ENCODE measurements at regions of chr13 and their contacts with region 1.

Region 1: GRCh38 chr13:111066544-111066943 is 48.6 kb upstream of the ARHGEF7 start:
- DNase-seq: no peak
- ATAC-seq: no peak
- H3K4me3 ChIP-seq: peak overlapping the region in 1 of 5 experiments; percentile 24
- H3K4me3 Mint-ChIP-seq: peak overlapping the region; percentile 78
- H3K27ac ChIP-seq: no peak overlapping the region
- H3K27ac Mint-ChIP-seq: no peak overlapping the region
- H3K4me1 ChIP-seq: peaks cover 8 to 11% of the 10 kb centered on the region in 2 donors
- H3K4me1 Mint-ChIP-seq: peaks cover 9% of the 10 kb centered on the region
- H3K27me3 ChIP-seq: peaks cover 0 to 24% (median 7%) of the 10 kb centered on the region in 4 experiments
- H3K27me3 Mint-ChIP-seq: peaks cover 42% of the 10 kb centered on the region
- CTCF ChIP-seq: no peak

Region 2: DNA sequence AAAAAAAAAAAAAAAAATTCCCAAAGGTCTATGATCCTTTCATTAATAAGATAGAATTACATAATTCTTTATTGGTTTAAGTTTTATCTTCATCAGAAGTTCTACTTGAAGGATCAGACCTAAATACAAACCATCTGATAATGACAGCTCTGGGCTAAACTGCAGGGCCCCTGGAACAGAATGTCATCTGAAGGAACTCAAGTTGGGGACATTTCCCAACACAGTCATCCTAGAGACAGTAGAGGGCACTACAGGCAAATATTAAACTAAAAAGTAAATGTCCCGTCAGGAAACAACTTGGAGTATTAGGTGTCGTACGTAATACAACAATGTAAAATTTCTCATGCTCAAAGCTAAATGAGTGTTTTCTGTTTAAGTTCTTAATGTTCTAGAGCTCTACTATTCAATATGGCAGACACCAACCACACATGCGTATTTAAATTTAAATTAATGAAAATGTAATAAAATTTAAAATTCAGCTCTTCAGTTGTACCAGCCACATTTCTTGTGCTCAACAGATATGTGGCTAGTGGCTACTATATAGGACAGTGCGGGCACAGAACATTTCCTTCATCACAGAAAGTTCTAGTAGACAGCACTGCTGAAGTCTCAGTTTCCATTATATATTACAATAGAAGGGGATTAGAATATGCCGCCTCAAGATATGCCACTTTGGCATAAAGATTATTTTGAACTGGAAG is 473.0 kb before region 1 on chr13:
- CTCF ChIA-PET with region 1: interaction called, 4 read pairs
- POLR2A ChIA-PET with region 1: no interaction called
- intact Hi-C with region 1: loop called (anchors 10 kb)
- DNase-seq: peak; percentile 64
- ATAC-seq: peak; percentile 68
- H3K4me3 ChIP-seq: no peak overlapping the region
- H3K4me3 Mint-ChIP-seq: no peak overlapping the region
- H3K27ac ChIP-seq: no peak overlapping the region
- H3K27ac Mint-ChIP-seq: no peak overlapping the region
- H3K4me1 ChIP-seq: no peaks in the 10 kb centered on the region
- H3K4me1 Mint-ChIP-seq: peaks cover 4% of the 10 kb centered on the region
- H3K27me3 ChIP-seq: no peaks in the 10 kb centered on the region
- H3K27me3 Mint-ChIP-seq: no peaks in the 10 kb centered on the region
- CTCF ChIP-seq: peak; percentile 61

Region 3: GRCh38 chr13:111042526-111043225 is 23.9 kb before region 1 on chr13:
- CTCF ChIA-PET with region 1: no interaction called
- POLR2A ChIA-PET with region 1: no interaction called
- intact Hi-C with region 1: no loop called
- DNase-seq: no peak
- ATAC-seq: no peak
- H3K4me3 ChIP-seq: no peak overlapping the region
- H3K4me3 Mint-ChIP-seq: no peak overlapping the region
- H3K27ac ChIP-seq: no peak overlapping the region
- H3K27ac Mint-ChIP-seq: no peak overlapping the region
- H3K4me1 ChIP-seq: peaks cover 3 to 8% of the 10 kb centered on the region in 2 donors
- H3K4me1 Mint-ChIP-seq: peaks cover 20% of the 10 kb centered on the region
- H3K27me3 ChIP-seq: no peaks in the 10 kb centered on the region
- H3K27me3 Mint-ChIP-seq: peaks cover 28% of the 10 kb centered on the region
- CTCF ChIP-seq: no peak

Region 4: DNA sequence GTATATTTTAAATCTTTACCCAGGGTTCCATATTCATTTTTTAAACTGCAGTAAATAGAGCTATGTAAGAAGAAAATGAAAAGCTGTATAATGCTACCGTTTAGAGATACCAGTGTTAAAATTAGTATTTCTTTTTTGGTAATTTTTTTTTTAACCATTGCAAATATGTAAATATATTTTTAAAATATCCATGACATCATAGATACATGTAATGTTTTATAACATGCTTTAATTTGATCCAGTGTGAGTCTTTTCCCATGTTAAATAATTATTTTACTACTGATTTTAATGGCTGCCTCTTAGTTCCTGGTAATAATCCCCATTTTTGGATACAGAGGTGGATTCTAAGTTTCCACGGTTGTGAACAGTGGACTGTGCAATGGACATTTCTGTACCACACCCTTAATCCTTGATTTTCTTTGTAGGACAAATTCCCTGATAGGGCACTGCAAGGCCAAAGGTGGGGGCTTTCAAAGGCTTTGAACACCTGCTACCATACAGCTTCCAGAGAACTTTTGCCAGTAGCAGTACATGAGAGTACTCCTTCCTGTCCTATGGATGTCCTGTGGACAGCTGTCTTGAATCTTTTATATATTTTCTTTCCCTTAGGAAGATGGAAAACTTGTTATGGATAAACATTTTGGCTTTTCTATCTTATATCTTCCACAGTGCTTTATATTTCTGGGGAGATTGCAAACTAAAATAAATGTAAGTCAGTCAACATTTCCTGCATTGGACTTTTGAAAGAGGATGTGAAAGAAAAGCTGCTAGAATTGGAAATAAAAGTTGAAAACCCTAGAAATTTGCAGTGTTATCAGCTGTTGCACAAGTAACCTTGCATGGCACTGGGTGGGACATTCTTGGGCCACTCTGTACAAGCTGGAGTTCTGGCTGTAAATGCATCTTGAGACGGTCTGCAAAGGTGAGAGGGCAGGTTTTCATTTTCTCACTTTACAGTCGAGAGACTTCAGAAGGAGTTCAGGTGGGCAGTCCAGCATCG is 95.4 kb after region 1 on chr13:
- CTCF ChIA-PET with region 1: interaction called, 11 read pairs
- POLR2A ChIA-PET with region 1: no interaction called
- intact Hi-C with region 1: no loop called
- DNase-seq: no peak
- ATAC-seq: no peak
- H3K4me3 ChIP-seq: peak overlapping the region in 1 of 5 experiments; percentile 23
- H3K4me3 Mint-ChIP-seq: peak overlapping the region; percentile 62
- H3K27ac ChIP-seq: peak overlapping the region in 1 of 2 donors; percentile 8
- H3K27ac Mint-ChIP-seq: peak overlapping the region; percentile 65
- H3K4me1 ChIP-seq: peaks cover 42 to 50% of the 10 kb centered on the region in 2 donors
- H3K4me1 Mint-ChIP-seq: peaks cover 67% of the 10 kb centered on the region
- H3K27me3 ChIP-seq: no peaks in the 10 kb centered on the region
- H3K27me3 Mint-ChIP-seq: no peaks in the 10 kb centered on the region
- CTCF ChIP-seq: no peak

Region 5: GRCh38 chr13:111177081-111177711 is 110.7 kb after region 1 on chr13:
- CTCF ChIA-PET with region 1: interaction called, 11 read pairs
- POLR2A ChIA-PET with region 1: no interaction called
- intact Hi-C with region 1: no loop called
- DNase-seq: peak; percentile 69
- ATAC-seq: peak; percentile 74
- H3K4me3 ChIP-seq: peak overlapping the region in 1 of 5 experiments; percentile 5
- H3K4me3 Mint-ChIP-seq: peak overlapping the region; percentile 78
- H3K27ac ChIP-seq: peak overlapping the region; percentile 61 to 73
- H3K27ac Mint-ChIP-seq: peak overlapping the region; percentile 95
- H3K4me1 ChIP-seq: peaks cover 46 to 58% of the 10 kb centered on the region in 2 donors
- H3K4me1 Mint-ChIP-seq: peaks cover 75% of the 10 kb centered on the region
- H3K27me3 ChIP-seq: no peaks in the 10 kb centered on the region
- H3K27me3 Mint-ChIP-seq: no peaks in the 10 kb centered on the region
- CTCF ChIP-seq: no peak

Region 6: GRCh38 chr13:111210544-111211469 is 144.3 kb after region 1 on chr13:
- CTCF ChIA-PET with region 1: interaction called, 167 read pairs
- POLR2A ChIA-PET with region 1: interaction called, 9 read pairs
- intact Hi-C with region 1: loop called (anchors 1 kb)
- DNase-seq: no peak
- ATAC-seq: no peak
- H3K4me3 ChIP-seq: no peak overlapping the region
- H3K4me3 Mint-ChIP-seq: no peak overlapping the region
- H3K27ac ChIP-seq: peak overlapping the region in 1 of 2 donors; percentile 29
- H3K27ac Mint-ChIP-seq: peak overlapping the region; percentile 22
- H3K4me1 ChIP-seq: peaks cover 14 to 29% of the 10 kb centered on the region in 2 donors
- H3K4me1 Mint-ChIP-seq: peaks cover 54% of the 10 kb centered on the region
- H3K27me3 ChIP-seq: no peaks in the 10 kb centered on the region
- H3K27me3 Mint-ChIP-seq: no peaks in the 10 kb centered on the region
- CTCF ChIP-seq: no peak

Region 7: DNA sequence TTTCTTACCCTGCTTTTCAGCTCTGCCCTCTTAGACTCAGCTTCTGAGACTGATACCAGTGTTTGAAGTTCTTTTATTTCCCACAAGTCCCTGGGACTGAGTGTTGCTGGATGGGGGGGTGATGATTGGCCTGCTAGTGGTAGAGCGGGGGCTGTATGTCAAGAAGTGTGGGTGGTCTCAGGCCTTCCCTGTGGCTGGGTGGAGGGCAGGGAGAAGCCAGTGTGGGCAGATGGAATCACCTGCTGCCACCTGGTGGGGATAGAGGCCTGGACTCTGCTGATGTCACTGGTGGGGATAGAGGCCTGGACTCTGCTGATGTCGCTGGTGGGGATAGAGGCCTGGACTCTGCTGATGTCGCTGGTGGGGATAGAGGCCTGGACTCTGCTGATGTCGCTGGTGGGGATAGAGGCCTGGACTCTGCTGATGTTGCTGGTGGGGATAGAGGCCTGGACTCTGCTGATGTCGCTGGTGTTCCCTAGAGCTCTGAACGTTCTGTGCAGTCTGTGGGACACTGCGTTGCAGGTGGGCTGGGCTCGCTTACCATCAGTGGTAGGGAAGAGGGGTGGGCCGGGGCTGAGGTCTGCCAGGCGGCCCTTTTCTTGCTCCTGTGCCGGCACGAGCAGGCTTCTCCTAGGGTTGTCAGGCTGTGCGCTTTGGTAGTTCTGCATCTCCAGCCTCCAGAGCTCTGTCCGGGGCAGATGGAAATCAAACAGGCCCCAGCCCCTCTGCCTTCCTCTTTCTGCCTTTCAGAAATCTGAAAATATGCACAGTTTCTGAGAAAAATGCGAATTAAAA is 149.8 kb after region 1 on chr13:
- CTCF ChIA-PET with region 1: interaction called, 167 read pairs
- POLR2A ChIA-PET with region 1: interaction called, 9 read pairs
- intact Hi-C with region 1: loop called (anchors 1 kb)
- DNase-seq: peak; percentile 61
- ATAC-seq: peak; percentile 74
- H3K4me3 ChIP-seq: no peak overlapping the region
- H3K4me3 Mint-ChIP-seq: no peak overlapping the region
- H3K27ac ChIP-seq: no peak overlapping the region
- H3K27ac Mint-ChIP-seq: peak overlapping the region; percentile 55
- H3K4me1 ChIP-seq: peaks cover 18 to 31% of the 10 kb centered on the region in 2 donors
- H3K4me1 Mint-ChIP-seq: peaks cover 47% of the 10 kb centered on the region
- H3K27me3 ChIP-seq: no peaks in the 10 kb centered on the region
- H3K27me3 Mint-ChIP-seq: no peaks in the 10 kb centered on the region
- CTCF ChIP-seq: peak; percentile 62

Region 8: DNA sequence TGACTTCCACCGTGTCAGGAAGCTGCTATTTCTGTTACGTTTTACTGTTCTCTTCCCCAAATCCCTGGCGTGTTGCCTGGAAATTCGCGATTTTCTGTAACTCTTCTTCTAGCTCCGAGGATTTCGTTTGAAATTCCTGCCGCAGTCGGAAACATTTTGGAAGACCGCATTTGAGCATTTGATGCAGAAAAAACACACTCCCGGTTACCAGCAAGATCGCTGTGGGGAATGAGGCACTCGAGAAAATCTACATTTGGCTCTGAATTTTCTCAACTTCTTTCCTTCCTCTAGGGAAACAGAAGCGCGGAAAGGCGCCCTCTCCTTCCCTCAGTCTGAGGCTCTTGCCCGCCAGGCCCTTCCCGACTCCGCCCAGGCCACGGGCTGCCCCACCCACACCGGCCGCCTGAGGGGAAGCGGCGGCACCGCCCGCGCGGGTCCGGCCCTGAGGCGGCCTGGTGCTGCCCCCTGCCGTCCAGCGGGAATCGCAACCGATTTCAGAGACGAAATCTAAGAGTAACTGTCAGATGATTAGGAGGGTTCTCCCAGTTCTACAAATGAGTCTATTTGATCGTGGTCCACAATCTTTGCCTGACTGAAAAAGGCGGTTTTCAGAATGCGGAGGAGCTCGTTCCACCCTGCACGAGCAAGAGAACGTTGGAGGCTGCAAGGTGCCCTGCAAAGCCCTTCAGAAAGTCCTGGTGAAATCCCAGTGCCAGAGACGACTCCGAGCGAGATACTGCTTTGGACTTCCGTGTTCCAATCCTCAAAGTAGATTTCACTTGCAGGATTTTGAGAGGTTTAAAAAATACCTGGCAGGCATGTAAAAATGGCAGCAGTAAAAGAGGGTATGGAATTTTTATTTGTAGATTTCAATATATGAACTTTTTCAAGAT is 1539.8 kb after region 1 on chr13:
- CTCF ChIA-PET with region 1: interaction called, 5 read pairs
- POLR2A ChIA-PET with region 1: no interaction called
- intact Hi-C with region 1: loop called (anchors 5 kb)
- DNase-seq: peak; percentile 87
- ATAC-seq: peak; percentile 100
- H3K4me3 ChIP-seq: peak overlapping the region; percentile 35 to 68 (median 58)
- H3K4me3 Mint-ChIP-seq: peak overlapping the region; percentile 87
- H3K27ac ChIP-seq: no peak overlapping the region
- H3K27ac Mint-ChIP-seq: no peak overlapping the region
- H3K4me1 ChIP-seq: peaks cover 5 to 9% of the 10 kb centered on the region in 2 donors
- H3K4me1 Mint-ChIP-seq: peaks cover 8% of the 10 kb centered on the region
- H3K27me3 ChIP-seq: peaks cover 0 to 14% (median 5%) of the 10 kb centered on the region in 4 experiments
- H3K27me3 Mint-ChIP-seq: peaks cover 34% of the 10 kb centered on the region
- CTCF ChIP-seq: peak; percentile 99